HCT116 (cell line): ENCODE measurements at regions of chr6 and their contacts with region 1.

Region 1: GRCh38 chr6:26196846-26197648 is 109.8 kb downstream of the HFE start:
- DNase-seq: peak; percentile 75
- ATAC-seq: peak; percentile 41
- H3K4me3 ChIP-seq: peak overlapping the region; percentile 70 to 76
- H3K27ac ChIP-seq: peak overlapping the region; percentile 98
- H3K4me1 ChIP-seq: peaks cover 13 to 37% of the 10 kb centered on the region in 2 experiments
- H3K27me3 ChIP-seq: no peaks in the 10 kb centered on the region
- CTCF ChIP-seq: no peak
- POLR2A ChIP-seq: peak; percentile 92
- RAD21 ChIP-seq: no peak

Region 2: GRCh38 chr6:26054857-26055669 is 142.0 kb before region 1 on chr6:
- CTCF ChIA-PET with region 1: no interaction called
- POLR2A ChIA-PET with region 1: interaction called, 22 read pairs
- RAD21 ChIA-PET with region 1: no interaction called
- intact Hi-C with region 1: no loop called
- DNase-seq: peak; percentile 98
- ATAC-seq: peak; percentile 70
- H3K4me3 ChIP-seq: peak overlapping the region; percentile 52 to 73
- H3K27ac ChIP-seq: peak overlapping the region; percentile 85
- H3K4me1 ChIP-seq: peaks cover 41 to 68% of the 10 kb centered on the region in 2 experiments
- H3K27me3 ChIP-seq: no peaks in the 10 kb centered on the region
- CTCF ChIP-seq: 0 out of 6 replicates have a peak, but pooled peaks of 1 of the 3 experiments have one; percentile 5
- POLR2A ChIP-seq: no peak
- RAD21 ChIP-seq: peak; percentile 30

Region 3: GRCh38 chr6:26175428-26176181 is 21.4 kb before region 1 on chr6:
- CTCF ChIA-PET with region 1: interaction called, 3 read pairs
- POLR2A ChIA-PET with region 1: interaction called, 34 read pairs
- RAD21 ChIA-PET with region 1: no interaction called
- intact Hi-C with region 1: no loop called
- DNase-seq: no peak
- ATAC-seq: no peak
- H3K4me3 ChIP-seq: no peak overlapping the region
- H3K27ac ChIP-seq: peak overlapping the region; percentile 46; the same call in 1 of the 2 replicates
- H3K4me1 ChIP-seq: peaks cover 11 to 28% of the 10 kb centered on the region in 2 experiments
- H3K27me3 ChIP-seq: no peaks in the 10 kb centered on the region
- CTCF ChIP-seq: peak; percentile 62 to 75 (median 73)
- POLR2A ChIP-seq: no peak
- RAD21 ChIP-seq: peak; percentile 83

Region 4: DNA sequence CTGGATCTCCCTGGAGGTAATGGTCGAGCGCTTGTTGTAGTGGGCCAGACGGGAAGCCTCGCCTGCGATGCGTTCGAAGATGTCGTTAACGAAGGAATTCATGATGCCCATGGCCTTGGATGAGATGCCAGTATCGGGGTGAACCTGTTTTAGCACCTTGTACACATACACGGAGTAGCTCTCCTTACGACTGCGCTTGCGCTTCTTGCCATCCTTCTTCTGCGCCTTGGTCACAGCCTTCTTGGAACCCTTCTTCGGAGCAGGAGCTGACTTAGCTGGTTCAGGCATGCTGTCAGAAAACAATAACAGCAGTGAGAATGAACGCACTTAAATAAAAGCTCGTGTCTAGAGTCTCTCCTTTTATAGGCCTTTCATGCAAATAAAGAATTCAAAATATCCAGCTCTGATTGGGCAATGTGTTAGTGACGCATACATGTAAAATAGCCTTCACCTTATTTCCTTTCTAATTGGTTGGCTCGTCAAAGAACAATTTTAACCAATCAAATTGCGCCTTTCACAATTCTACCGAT is 19.4 kb after region 1 on chr6:
- CTCF ChIA-PET with region 1: no interaction called
- POLR2A ChIA-PET with region 1: interaction called, 11 read pairs
- RAD21 ChIA-PET with region 1: no interaction called
- intact Hi-C with region 1: no loop called
- DNase-seq: no peak
- ATAC-seq: no peak
- H3K4me3 ChIP-seq: no peak overlapping the region
- H3K27ac ChIP-seq: no peak overlapping the region
- H3K4me1 ChIP-seq: peaks cover 0 to 7% of the 10 kb centered on the region in 2 experiments; a peak in 1 of 4 replicates
- H3K27me3 ChIP-seq: no peaks in the 10 kb centered on the region
- CTCF ChIP-seq: no peak
- POLR2A ChIP-seq: no peak
- RAD21 ChIP-seq: no peak

Region 5: GRCh38 chr6:27132532-27133280 is 935.7 kb after region 1 on chr6:
- CTCF ChIA-PET with region 1: interaction called, 3 read pairs
- POLR2A ChIA-PET with region 1: interaction called, 42 read pairs
- RAD21 ChIA-PET with region 1: no interaction called
- intact Hi-C with region 1: loop called (anchors 5 kb)
- DNase-seq: peak; percentile 100
- ATAC-seq: peak; percentile 75
- H3K4me3 ChIP-seq: peak overlapping the region; percentile 62 to 71
- H3K27ac ChIP-seq: peak overlapping the region; percentile 99
- H3K4me1 ChIP-seq: peaks cover 21 to 38% of the 10 kb centered on the region in 2 experiments
- H3K27me3 ChIP-seq: no peaks in the 10 kb centered on the region
- CTCF ChIP-seq: no peak
- POLR2A ChIP-seq: peak; percentile 98
- RAD21 ChIP-seq: no peak